ENCODE measurements at regions of chr18 and their contacts with region 1.

Region 1: GRCh38 chr18:43271593-43272432 is 5.5 kb downstream of the SYT4 start:
- DNase-seq: peak; percentile 4 to 13 (median 6)
- H3K4me3 ChIP-seq: no peak overlapping the region
- H3K4me3 Mint-ChIP-seq: no peak overlapping the region
- H3K27ac ChIP-seq: no peak overlapping the region
- H3K27ac Mint-ChIP-seq: no peak overlapping the region
- H3K4me1 ChIP-seq: no peaks in the 10 kb centered on the region
- H3K4me1 Mint-ChIP-seq: no peaks in the 10 kb centered on the region
- H3K27me3 ChIP-seq: peaks cover 0 to 4% of the 10 kb centered on the region in 2 donors
- H3K27me3 Mint-ChIP-seq: peaks cover 0 to 3% (median 2%) of the 10 kb centered on the region in 3 donors
- CTCF ChIP-seq: peak; percentile 85

Region 2: GRCh38 chr18:42114310-42114943 is 1157.4 kb before region 1 on chr18:
- intact Hi-C with region 1: loop called (anchors 10 kb)
- DNase-seq: peak; percentile 24 to 53 (median 26)
- H3K4me3 ChIP-seq: peak overlapping the region in 2 of 3 experiments; percentile 10 to 52
- H3K4me3 Mint-ChIP-seq: peak overlapping the region in 1 of 2 donors; percentile 73
- H3K27ac ChIP-seq: no peak overlapping the region
- H3K27ac Mint-ChIP-seq: no peak overlapping the region
- H3K4me1 ChIP-seq: peaks cover 15 to 19% of the 10 kb centered on the region in 2 donors
- H3K4me1 Mint-ChIP-seq: peaks cover 18% of the 10 kb centered on the region
- H3K27me3 ChIP-seq: no peaks in the 10 kb centered on the region
- H3K27me3 Mint-ChIP-seq: peaks cover 0 to 3% (median 1%) of the 10 kb centered on the region in 3 donors
- CTCF ChIP-seq: peak; percentile 91

Region 3: DNA sequence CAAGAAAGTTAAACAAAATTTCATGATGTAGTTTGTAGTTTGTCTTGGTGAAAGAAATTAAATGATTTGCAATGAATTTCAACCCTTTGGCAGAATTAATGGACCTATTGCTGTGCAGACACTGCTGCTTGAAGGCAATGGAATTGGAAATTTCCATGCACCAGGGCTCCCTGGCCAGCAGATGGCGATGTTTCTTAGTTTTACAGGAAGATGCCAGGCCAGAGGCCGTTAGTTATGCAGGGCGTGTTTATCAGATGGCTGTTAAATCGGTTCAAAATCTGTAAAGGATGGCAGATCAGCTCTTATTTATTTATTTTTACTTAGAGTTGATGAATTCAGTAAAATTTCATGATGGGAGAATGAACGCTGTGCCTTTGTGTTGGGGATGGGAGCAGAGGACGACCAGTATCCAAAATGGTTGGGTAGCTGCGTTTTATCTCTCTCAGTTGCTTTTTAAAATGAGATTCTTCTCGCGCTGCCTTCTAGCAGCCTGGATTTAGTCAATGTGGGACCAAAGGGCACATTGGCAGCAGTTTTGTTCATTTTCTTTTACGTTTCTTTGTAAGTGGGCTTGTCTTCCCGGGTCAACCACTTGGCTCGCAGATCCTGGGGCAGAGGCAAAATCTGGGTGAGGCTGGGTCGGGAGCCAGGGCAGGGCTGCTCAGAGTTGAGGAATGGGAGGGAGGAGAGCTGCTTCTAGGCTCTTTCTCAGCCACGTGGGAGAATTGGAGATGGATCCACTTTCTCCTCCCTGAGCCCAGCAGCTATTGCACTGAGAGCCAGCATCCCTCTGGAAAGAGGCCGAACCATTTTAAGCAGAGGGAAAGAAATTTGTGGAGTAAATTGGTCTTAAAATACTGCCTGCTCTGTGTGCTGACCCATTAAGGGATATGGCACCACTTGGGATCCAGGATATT is 972.8 kb before region 1 on chr18:
- intact Hi-C with region 1: loop called in 1 of 2 experiments (anchors 10 kb)
- DNase-seq: peak; percentile 6 to 32 (median 31)
- H3K4me3 ChIP-seq: no peak overlapping the region
- H3K4me3 Mint-ChIP-seq: no peak overlapping the region
- H3K27ac ChIP-seq: no peak overlapping the region
- H3K27ac Mint-ChIP-seq: no peak overlapping the region
- H3K4me1 ChIP-seq: no peaks in the 10 kb centered on the region
- H3K4me1 Mint-ChIP-seq: no peaks in the 10 kb centered on the region
- H3K27me3 ChIP-seq: no peaks in the 10 kb centered on the region
- H3K27me3 Mint-ChIP-seq: peaks cover 2 to 3% (median 3%) of the 10 kb centered on the region in 3 donors
- CTCF ChIP-seq: peak; percentile 93